ENCODE measurements at regions of chr19 and their contacts with region 1.

Region 1: GRCh38 chr19:38142176-38143035 is 81.6 kb downstream of the DPF1 start:
- DNase-seq: no peak
- H3K4me3 ChIP-seq: no peak overlapping the region
- H3K27ac ChIP-seq: no peak overlapping the region
- H3K4me1 ChIP-seq: no peaks in the 10 kb centered on the region
- H3K27me3 ChIP-seq: no peaks in the 10 kb centered on the region
- CTCF ChIP-seq: peak in 2 of 4 experiments; percentile 37 to 48
- POLR2A ChIP-seq: no peak

Region 2: DNA sequence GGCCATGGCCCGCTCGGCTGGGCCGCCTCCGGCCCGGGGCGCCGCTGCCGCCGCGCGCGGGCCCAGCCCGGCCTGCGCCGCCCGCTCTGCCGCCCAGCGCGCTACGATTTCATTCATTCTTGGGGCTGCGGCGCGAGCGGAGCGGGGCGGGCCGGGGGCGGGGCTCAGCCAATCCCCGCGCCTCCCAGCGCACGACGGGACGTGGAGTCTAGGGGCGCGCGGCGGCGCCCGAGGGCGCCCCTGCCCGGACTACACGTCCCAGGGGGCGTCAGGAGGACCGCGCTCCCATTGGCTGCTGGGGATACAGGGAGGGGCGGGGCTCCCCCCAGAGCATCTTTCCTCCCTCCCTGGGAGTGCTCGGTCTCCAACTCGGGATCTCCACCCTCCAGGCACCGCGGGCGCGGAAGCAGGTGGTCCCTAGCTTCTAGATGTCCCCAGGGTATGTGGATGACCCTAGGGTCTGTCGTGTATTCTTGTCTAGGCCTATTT is 87.2 kb after region 1 on chr19:
- intact Hi-C with region 1: loop called (anchors 10 kb)
- DNase-seq: peak; percentile 31
- H3K4me3 ChIP-seq: no peak overlapping the region
- H3K27ac ChIP-seq: no peak overlapping the region
- H3K4me1 ChIP-seq: peaks cover 12% of the 10 kb centered on the region
- H3K27me3 ChIP-seq: peaks cover 12% of the 10 kb centered on the region
- CTCF ChIP-seq: no peak
- POLR2A ChIP-seq: no peak

Measured in prostate gland (tissue), 2 donors.